ENCODE measurements at regions of chr17 and their contacts with region 1.

Region 1: DNA sequence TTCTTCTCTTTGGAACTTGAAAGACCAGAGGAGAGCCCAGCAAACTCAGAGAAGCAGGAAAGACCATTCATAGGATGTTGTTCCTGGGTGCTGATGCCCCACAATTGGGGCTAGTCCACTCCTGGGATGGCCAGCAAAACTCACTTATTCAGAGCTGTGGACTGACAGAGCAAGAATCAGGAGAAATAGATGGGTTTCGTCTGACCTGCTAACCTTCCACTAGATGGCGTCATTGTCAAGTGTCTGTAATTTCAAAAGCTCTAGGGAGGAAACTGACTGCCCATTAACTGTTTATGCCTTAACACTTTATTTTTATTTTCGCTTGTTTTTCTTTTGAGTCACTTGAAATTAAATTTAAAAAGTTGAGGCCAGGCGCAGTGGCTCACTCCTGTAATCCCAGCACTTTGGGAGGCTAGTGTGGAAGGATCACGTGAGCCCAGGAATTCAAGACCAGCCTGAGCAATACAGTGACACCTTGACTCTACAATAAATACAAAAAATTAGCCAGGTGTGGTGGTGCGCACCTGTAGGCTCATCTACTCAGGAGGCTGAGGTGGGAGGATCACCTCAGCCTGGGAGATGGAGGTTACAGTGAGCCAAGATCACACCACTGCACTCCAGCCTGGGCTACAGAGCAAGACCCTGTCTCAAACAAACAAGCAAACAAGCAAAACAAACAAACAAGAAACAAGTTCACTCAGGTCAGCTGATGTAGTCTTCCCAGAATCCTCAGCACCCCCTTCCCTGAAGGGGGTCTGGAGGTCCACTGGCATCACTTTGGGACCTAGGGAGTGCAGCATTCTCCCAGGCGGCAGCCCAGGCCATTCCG is 28.6 kb upstream of the MILR1 start:
- H3K4me3 ChIP-seq: no peak overlapping the region
- H3K27ac ChIP-seq: no peak overlapping the region
- H3K4me1 ChIP-seq: no peaks in the 10 kb centered on the region
- CTCF ChIP-seq: peak; percentile 45; the same call in 1 of the 2 replicates

Region 2: DNA sequence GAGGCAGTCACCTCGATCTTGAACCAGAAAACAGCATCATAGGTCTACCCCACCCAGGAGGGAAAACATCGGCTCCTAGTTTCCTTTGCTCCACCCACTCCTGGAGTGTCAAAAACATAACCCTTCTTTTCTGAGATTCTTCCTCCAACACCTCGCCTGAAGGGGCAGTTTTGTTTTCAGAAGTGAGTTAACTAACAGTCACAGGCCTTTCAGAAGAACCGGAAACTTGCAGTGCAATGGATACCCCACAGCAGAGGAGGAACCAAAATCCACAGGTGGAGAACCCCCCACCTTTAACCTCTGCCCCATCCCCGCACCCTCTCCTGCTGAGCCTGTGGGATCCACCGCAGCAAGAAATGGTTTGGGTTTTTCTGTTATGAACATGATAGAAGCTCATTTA is 149.5 kb before region 1 on chr17:
- CTCF ChIA-PET with region 1: no interaction called
- POLR2A ChIA-PET with region 1: no interaction called
- H3K4me3 ChIP-seq: no peak overlapping the region
- H3K27ac ChIP-seq: no peak overlapping the region
- H3K4me1 ChIP-seq: no peaks in the 10 kb centered on the region
- CTCF ChIP-seq: no peak

Region 3: GRCh38 chr17:64281962-64282727 is 138.2 kb before region 1 on chr17:
- CTCF ChIA-PET with region 1: interaction called, 11 read pairs
- POLR2A ChIA-PET with region 1: no interaction called
- H3K4me3 ChIP-seq: no peak overlapping the region
- H3K27ac ChIP-seq: no peak overlapping the region
- H3K4me1 ChIP-seq: no peaks in the 10 kb centered on the region
- CTCF ChIP-seq: peak; percentile 48; the same call in 1 of the 2 replicates

Region 4: DNA sequence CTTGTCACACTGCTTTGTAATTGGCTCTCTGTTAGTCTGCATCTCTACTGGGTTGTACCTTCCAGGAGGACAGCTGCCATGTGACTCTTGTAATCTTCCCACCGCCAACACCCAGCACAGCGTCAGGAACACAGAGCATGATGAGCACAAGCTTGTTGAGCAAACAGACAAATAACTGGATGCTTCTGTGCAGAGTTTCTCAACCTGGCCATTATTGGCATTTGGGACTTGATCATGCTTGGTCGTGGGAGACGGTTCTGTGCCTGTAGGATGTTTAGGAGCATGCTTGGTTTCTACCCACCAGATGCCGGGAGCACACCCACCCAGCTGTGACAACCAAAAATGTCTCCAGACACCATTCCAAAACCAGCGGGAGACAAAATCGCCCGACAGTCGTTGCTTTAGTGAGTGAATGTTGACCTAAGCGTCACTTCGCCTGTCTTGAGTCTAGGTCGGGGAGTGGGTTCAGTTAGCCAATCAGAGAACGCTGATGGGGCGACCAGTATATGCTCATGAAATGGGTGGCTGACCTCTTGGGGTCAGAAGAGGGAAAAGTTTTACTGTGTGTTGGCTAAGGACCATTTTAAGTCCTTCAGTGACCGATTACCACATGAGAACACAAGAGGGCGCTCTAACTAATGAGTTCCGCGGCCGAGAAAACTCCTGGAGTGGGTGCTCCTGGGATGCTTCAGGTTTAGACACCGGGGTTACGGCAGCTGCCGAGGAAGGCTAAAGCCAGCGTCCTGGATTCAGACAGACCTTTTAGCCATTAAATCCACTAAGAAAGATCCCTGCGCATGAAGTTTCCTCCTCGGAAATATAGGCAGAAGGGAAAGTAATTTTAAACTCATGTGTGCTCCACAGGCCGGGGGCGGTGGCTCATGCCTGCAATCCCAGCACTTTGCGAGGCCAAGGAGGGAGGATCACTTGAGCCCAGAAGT is 99.5 kb before region 1 on chr17:
- CTCF ChIA-PET with region 1: interaction called, 196 read pairs
- POLR2A ChIA-PET with region 1: no interaction called
- H3K4me3 ChIP-seq: no peak overlapping the region
- H3K27ac ChIP-seq: no peak overlapping the region
- H3K4me1 ChIP-seq: no peaks in the 10 kb centered on the region
- CTCF ChIP-seq: peak; percentile 48; the same call in 1 of the 2 replicates

Region 5: GRCh38 chr17:64491034-64491859 is 70.9 kb after region 1 on chr17:
- CTCF ChIA-PET with region 1: interaction called, 75 read pairs
- POLR2A ChIA-PET with region 1: interaction called, 17 read pairs
- H3K4me3 ChIP-seq: no peak overlapping the region
- H3K27ac ChIP-seq: no peak overlapping the region
- H3K4me1 ChIP-seq: no peaks in the 10 kb centered on the region
- CTCF ChIP-seq: no peak

Region 6: DNA sequence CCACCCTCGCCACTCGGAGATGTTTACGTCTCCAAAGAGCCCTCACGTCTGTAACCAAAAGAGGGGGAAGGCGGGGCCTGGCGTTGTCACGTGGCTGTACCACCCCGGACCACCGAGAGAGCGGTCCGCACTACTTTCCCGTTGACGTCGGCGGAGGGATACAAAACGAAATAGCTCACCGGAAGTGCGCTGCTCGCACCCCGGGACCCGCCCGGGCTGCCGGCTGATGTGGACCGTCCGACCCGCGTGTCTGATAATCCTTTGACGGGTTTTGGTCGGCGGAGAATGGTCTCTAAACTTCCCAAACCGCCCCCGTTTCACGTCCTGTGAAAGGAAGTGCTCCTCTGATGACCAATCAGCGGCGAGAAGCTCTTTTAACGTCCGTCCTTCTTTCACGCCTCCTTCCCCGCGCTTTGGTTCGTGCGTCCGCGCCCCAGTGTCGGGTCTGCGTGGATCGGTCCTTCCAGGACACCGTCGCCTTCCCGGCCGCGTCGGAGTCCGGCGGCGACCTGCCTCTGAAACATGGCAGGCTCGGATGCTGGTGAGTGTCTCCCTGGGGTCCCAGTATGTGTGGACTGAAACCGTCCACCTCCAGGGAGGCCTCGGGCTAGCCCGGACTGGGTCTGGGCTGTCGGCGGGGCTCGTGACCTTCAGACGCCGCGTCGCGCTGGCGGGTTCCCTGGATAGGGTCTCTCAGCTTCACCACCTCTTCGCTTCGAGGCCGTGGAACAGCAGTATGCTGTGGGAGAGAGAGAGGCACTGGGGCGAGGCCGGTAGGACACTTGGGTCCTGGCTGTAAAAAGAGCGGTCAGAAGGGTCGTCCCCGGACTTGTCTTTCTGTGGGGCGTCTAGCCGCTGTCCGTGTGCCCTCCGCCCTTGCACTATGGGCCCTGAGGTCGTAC is 86.5 kb after region 1 on chr17 and contains the start of gene CEP95:
- CTCF ChIA-PET with region 1: interaction called, 10 read pairs
- POLR2A ChIA-PET with region 1: interaction called, 29 read pairs
- H3K4me3 ChIP-seq: peak within 1 kb of the TSS; percentile 100
- H3K27ac ChIP-seq: peak within 1 kb of the TSS; percentile 97
- H3K4me1 ChIP-seq: 0 out of 2 replicates have a peak, but pooled peaks cover 4% of the 10 kb centered on the region
- CTCF ChIP-seq: no peak; the same call in 1 of the 2 replicates

Region 7: DNA sequence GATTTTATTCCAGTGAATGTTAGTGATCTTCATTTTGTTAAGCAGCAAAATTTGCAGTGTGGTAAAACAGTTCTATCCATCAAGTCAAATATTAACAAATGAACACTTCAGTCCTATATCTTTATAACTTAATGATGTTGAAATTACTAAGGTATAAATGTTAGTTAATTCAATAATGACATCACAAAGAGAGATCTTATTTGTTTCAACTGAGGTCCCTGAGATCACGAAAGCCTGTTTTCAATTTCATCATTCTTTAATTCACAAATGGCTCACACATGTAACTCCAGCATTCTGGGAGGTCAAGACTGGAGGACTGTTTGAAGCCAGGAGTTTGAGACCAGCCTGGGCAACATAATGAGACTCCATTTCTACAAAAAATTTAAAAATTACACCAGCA is 227.9 kb after region 1 on chr17:
- CTCF ChIA-PET with region 1: interaction called, 41 read pairs
- POLR2A ChIA-PET with region 1: no interaction called
- H3K4me3 ChIP-seq: no peak overlapping the region
- H3K27ac ChIP-seq: no peak overlapping the region
- H3K4me1 ChIP-seq: no peaks in the 10 kb centered on the region
- CTCF ChIP-seq: no peak